ENCODE measurements at regions of chr14 and their contacts with region 1.

Region 1: DNA sequence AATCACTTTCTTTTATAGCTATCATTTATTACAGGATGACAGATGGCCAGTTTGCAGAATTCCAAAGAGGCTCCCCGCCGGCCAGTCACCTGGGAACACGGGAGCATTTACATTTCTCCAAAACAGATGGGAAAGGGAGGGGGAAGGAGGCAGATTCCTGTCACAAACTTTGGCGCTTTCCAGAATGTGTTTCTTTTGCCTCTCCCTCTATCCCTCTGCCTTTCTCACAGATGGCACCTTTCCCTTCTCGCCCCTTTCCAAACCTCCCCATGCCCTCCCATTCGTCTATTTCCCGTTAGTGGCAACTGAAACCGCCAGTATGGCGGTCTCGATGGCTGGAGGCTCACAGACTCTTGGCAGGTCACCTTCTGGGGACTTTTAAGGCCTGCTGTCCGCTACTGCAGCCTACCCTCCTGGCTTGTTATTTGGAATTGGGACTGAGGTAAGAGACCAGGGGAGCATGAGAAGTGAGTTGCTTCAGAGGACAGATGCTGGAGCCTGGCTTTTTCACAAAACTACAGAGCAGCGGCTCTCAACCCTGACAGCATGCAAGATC is 161.6 kb upstream of the VASH1 start:
- DNase-seq: no peak
- ATAC-seq: no peak
- H3K4me3 ChIP-seq: no peak overlapping the region
- H3K27ac ChIP-seq: no peak overlapping the region
- H3K4me1 ChIP-seq: peaks cover 0 to 8% (median 0%) of the 10 kb centered on the region in 9 donors
- H3K27me3 ChIP-seq: no peaks in the 10 kb centered on the region
- CTCF ChIP-seq: no peak

Region 2: DNA sequence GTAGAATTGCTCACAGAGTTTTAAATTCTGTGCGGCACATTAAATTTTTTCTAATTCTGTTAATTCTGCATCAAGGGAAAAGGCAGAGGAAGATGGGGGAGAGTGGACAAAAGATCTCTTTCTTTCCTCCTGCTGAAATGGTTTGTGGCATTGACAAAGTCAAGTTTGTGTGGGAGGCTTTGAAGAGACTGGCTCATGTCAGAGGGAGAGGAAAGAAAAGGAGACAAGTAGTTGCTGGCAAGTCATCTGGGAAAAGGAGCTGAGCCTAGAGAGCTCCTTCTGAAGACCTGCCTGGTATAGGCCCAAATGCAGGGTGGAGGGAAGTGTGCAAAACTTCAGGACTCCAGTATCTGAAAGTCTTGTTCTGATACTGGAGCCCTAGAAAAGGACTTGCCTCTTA is 902.3 kb before region 1 on chr14:
- intact Hi-C with region 1: no loop called
- DNase-seq: no peak
- ATAC-seq: no peak
- H3K4me3 ChIP-seq: no peak overlapping the region
- H3K27ac ChIP-seq: no peak overlapping the region
- H3K4me1 ChIP-seq: peaks cover 0 to 9% (median 5%) of the 10 kb centered on the region in 9 donors
- H3K27me3 ChIP-seq: no peaks in the 10 kb centered on the region
- CTCF ChIP-seq: no peak

Region 3: GRCh38 chr14:76267322-76268051 is 332.1 kb before region 1 on chr14:
- intact Hi-C with region 1: no loop called
- DNase-seq: peak; percentile 55 to 78
- ATAC-seq: peak; percentile 87 to 93 (median 91)
- H3K4me3 ChIP-seq: peak overlapping the region; percentile 16 to 62 (median 50)
- H3K27ac ChIP-seq: peak overlapping the region in 5 of 10 donors; percentile 17 to 46 (median 34)
- H3K4me1 ChIP-seq: peaks cover 0 to 13% (median 5%) of the 10 kb centered on the region in 9 donors
- H3K27me3 ChIP-seq: peaks cover 0 to 16% (median 0%) of the 10 kb centered on the region in 7 donors
- CTCF ChIP-seq: peak in 1 of 9 donors; percentile 12

Region 4: GRCh38 chr14:76664790-76665189 is 65.2 kb after region 1 on chr14:
- intact Hi-C with region 1: loop called in 1 of 10 experiments (anchors 2 kb)
- DNase-seq: no peak
- ATAC-seq: no peak
- H3K4me3 ChIP-seq: no peak overlapping the region
- H3K27ac ChIP-seq: no peak overlapping the region
- H3K4me1 ChIP-seq: no peaks in the 10 kb centered on the region
- H3K27me3 ChIP-seq: no peaks in the 10 kb centered on the region
- CTCF ChIP-seq: no peak

Region 5: DNA sequence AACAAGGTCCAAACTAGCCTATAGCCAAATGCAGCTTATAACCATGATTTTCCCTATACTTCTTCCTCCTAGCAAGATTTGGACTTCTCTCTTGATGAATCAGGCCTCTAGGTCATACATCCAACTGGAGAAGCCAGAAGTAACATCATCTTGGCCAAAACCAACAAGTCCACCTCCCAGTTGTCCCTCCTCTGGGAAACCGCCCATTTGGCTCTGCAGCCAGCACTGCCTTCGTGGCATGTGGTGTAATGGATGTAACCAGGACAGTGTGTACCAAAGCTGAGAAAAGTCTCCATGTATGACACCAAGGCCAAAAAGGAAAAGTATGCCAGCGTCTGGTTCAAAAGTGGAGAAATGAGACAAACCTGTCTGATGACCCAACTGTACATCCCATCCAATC is 102.3 kb after region 1 on chr14:
- intact Hi-C with region 1: no loop called
- DNase-seq: peak; percentile 38 to 49
- ATAC-seq: peak in 7 of 8 donors; percentile 57 to 87 (median 68)
- H3K4me3 ChIP-seq: no peak overlapping the region
- H3K27ac ChIP-seq: no peak overlapping the region
- H3K4me1 ChIP-seq: peaks cover 0 to 10% (median 4%) of the 10 kb centered on the region in 9 donors
- H3K27me3 ChIP-seq: peaks cover 0 to 4% (median 0%) of the 10 kb centered on the region in 7 donors
- CTCF ChIP-seq: no peak

Region 6: DNA sequence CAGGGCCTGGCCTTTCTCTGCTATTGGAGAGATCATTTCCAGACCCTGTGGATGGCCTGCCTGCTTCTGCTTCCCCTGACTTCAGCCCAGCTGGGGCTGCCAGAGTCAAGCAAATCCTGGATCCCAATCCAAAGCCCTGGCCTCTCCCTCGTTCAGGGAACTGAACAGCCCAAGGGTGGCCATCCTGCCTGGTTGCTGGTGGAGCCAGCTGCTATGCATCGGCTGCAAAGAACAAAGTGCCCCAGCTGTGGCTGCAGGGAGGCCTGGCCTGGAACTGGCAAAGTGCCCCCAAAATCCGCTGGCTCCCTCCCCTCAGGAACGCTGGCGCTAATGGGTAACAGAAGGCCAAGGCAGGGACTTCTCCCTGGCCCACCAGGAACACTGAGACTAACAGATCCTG is 283.0 kb after region 1 on chr14:
- intact Hi-C with region 1: no loop called
- DNase-seq: peak in 1 of 2 donors; percentile 31
- ATAC-seq: peak in 1 of 8 donors; percentile 7
- H3K4me3 ChIP-seq: no peak overlapping the region
- H3K27ac ChIP-seq: no peak overlapping the region
- H3K4me1 ChIP-seq: peaks cover 6 to 44% (median 19%) of the 10 kb centered on the region in 9 donors
- H3K27me3 ChIP-seq: no peaks in the 10 kb centered on the region
- CTCF ChIP-seq: no peak